ENCODE measurements at regions of chr5 and their contacts with region 1.

Region 1: DNA sequence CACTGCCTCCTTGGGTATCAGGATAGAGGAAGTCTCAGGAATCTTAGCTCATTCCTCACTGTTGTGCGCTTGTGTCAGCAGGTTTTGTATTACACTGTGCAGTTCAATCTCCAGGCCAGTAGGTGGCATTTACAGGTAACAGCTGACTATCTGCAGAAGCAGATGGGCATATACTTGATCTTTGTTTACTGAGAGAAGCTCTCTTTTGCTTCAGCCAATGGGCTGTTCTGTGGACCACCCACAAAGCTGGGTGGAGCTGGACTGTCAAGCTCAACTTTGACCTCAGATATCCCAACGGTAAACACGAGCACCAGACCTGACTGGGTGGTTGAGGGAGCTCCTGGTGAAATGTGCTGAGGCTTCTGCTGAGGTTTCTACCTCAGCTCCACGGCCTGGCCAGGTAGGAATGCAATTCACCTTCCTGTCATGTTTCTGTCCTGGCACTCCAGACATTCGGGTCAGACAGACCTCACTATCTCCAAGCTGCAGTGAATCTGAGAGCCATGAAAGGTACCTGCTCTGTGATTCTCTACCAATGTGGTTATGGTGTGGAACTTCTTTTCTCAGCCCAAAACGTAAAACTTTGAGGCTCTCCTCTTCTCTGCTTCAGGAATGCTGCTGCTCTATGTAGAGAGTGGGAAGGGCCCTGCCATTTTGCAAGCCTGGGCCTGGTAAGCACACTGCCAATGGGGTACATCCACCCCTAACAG is 167.9 kb upstream of the ACTBL2 start:
- DNase-seq: peak; percentile 84 to 89
- H3K4me3 ChIP-seq: peak overlapping the region; percentile 4; the same call in 1 of the 2 replicates
- H3K4me3 Mint-ChIP-seq: peak overlapping the region; percentile 30
- H3K27ac Mint-ChIP-seq: peak overlapping the region; percentile 0
- H3K4me1 ChIP-seq: peaks cover 9% of the 10 kb centered on the region
- H3K4me1 Mint-ChIP-seq: peaks cover 12% of the 10 kb centered on the region
- H3K27me3 ChIP-seq: no peaks in the 10 kb centered on the region; the same call in 1 of the 2 replicates
- H3K27me3 Mint-ChIP-seq: no peaks in the 10 kb centered on the region
- CTCF ChIP-seq: peak; percentile 74 to 76

Region 2: DNA sequence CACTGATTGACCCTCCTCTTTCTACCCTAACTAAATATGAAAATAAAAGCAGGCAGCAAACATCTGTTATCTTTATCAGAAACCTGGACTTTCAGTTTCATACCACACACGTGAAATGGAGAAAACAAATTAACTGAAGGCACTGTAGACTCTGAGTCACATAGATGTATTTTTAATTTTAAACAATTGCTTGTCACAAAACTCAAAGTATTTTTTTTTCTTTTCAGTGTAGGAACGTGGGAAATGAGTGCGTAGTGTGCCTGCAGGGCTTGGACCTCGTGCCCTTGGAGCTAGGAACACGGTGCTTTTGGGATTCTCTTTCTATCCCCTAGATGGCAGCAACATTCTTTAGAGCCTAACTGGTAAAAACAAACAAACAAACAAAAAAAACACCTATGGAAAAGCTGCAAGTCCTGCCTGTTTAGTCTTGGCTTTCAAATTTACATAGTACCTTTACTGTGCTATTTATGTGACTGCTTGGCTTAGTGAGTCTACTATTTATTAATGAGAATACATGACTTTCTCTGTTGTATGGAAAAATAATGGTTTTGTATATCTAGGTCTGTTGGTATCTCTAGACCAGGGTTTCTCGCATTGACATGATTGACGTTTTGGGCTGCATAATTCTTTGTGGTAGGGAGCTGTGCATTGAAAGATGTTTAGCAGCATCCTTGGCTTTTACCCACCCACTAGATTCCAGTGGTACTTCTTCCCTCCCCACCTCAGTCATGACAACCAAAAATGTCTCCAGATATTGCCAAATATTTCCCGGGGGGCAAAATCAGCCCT is 151.1 kb before region 1 on chr5:
- CTCF ChIA-PET with region 1: interaction called, 28 read pairs
- POLR2A ChIA-PET with region 1: no interaction called
- intact Hi-C with region 1: loop called (anchors 5 kb)
- DNase-seq: peak in 1 of 2 experiments; percentile 53
- H3K4me3 ChIP-seq: no peak overlapping the region
- H3K4me3 Mint-ChIP-seq: peak overlapping the region; percentile 46
- H3K27ac Mint-ChIP-seq: no peak overlapping the region
- H3K4me1 ChIP-seq: peaks cover 7% of the 10 kb centered on the region
- H3K4me1 Mint-ChIP-seq: peaks cover 8% of the 10 kb centered on the region
- H3K27me3 ChIP-seq: no peaks in the 10 kb centered on the region
- H3K27me3 Mint-ChIP-seq: no peaks in the 10 kb centered on the region
- CTCF ChIP-seq: peak; percentile 67 to 77

Region 3: GRCh38 chr5:57698769-57699168 is 48.3 kb after region 1 on chr5:
- CTCF ChIA-PET with region 1: interaction called, 8 read pairs
- POLR2A ChIA-PET with region 1: no interaction called
- intact Hi-C with region 1: loop called (anchors 5 kb)
- DNase-seq: peak; percentile 46 to 48
- H3K4me3 ChIP-seq: no peak overlapping the region
- H3K4me3 Mint-ChIP-seq: no peak overlapping the region
- H3K27ac Mint-ChIP-seq: no peak overlapping the region
- H3K4me1 ChIP-seq: peaks cover 23% of the 10 kb centered on the region
- H3K4me1 Mint-ChIP-seq: peaks cover 15% of the 10 kb centered on the region
- H3K27me3 ChIP-seq: no peaks in the 10 kb centered on the region
- H3K27me3 Mint-ChIP-seq: no peaks in the 10 kb centered on the region
- CTCF ChIP-seq: no peak

Region 4: GRCh38 chr5:57754616-57755015 is 104.1 kb after region 1 on chr5:
- CTCF ChIA-PET with region 1: interaction called, 11 read pairs
- POLR2A ChIA-PET with region 1: no interaction called
- intact Hi-C with region 1: no loop called
- DNase-seq: no peak
- H3K4me3 ChIP-seq: no peak overlapping the region
- H3K4me3 Mint-ChIP-seq: no peak overlapping the region
- H3K27ac Mint-ChIP-seq: no peak overlapping the region
- H3K4me1 ChIP-seq: no peaks in the 10 kb centered on the region
- H3K4me1 Mint-ChIP-seq: no peaks in the 10 kb centered on the region
- H3K27me3 ChIP-seq: no peaks in the 10 kb centered on the region
- H3K27me3 Mint-ChIP-seq: no peaks in the 10 kb centered on the region
- CTCF ChIP-seq: no peak

Region 5: GRCh38 chr5:57779383-57780223 is 129.1 kb after region 1 on chr5:
- CTCF ChIA-PET with region 1: interaction called, 75 read pairs
- POLR2A ChIA-PET with region 1: no interaction called
- intact Hi-C with region 1: loop called (anchors 1 kb)
- DNase-seq: peak; percentile 50 to 69
- H3K4me3 ChIP-seq: no peak overlapping the region
- H3K4me3 Mint-ChIP-seq: no peak overlapping the region
- H3K27ac Mint-ChIP-seq: no peak overlapping the region
- H3K4me1 ChIP-seq: peaks cover 34% of the 10 kb centered on the region
- H3K4me1 Mint-ChIP-seq: peaks cover 21% of the 10 kb centered on the region
- H3K27me3 ChIP-seq: no peaks in the 10 kb centered on the region
- H3K27me3 Mint-ChIP-seq: no peaks in the 10 kb centered on the region
- CTCF ChIP-seq: peak; percentile 65 to 68

Region 6: GRCh38 chr5:57887851-57888621 is 237.5 kb after region 1 on chr5:
- CTCF ChIA-PET with region 1: interaction called, 16 read pairs
- POLR2A ChIA-PET with region 1: no interaction called
- intact Hi-C with region 1: no loop called
- DNase-seq: peak; percentile 72 to 75
- H3K4me3 ChIP-seq: no peak overlapping the region
- H3K4me3 Mint-ChIP-seq: no peak overlapping the region
- H3K27ac Mint-ChIP-seq: no peak overlapping the region
- H3K4me1 ChIP-seq: no peaks in the 10 kb centered on the region
- H3K4me1 Mint-ChIP-seq: no peaks in the 10 kb centered on the region
- H3K27me3 ChIP-seq: no peaks in the 10 kb centered on the region
- H3K27me3 Mint-ChIP-seq: no peaks in the 10 kb centered on the region
- CTCF ChIP-seq: peak; percentile 55 to 80

Region 7: DNA sequence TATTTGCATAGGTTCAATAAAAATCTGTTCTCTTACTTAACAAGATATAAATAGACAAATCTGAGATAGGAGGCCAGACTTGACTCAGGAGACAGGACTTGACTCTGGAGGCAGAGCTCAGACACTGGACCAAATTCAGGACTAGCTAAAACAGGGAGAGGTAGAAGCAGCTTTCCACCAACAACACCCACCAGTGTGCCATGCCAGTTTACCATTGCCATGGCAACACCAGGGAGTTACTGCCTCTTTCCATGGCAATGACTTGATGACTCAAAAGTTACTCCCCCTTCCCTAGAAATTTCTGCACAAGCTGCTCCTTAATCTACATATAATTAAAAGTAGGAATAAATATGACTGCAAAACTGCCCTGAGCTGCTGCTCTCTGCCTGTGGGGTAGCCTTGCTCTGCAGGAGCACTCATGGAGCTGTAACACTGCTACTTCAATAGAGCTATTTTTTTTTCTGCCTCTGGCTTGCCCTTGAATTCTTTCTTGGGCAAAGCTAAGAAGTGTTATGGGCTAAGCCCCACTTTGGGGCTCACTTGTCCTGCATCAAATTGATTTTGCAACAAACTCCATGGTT is 336.3 kb after region 1 on chr5:
- CTCF ChIA-PET with region 1: no interaction called
- POLR2A ChIA-PET with region 1: no interaction called
- intact Hi-C with region 1: no loop called
- DNase-seq: no peak
- H3K4me3 ChIP-seq: no peak overlapping the region
- H3K4me3 Mint-ChIP-seq: no peak overlapping the region
- H3K27ac Mint-ChIP-seq: no peak overlapping the region
- H3K4me1 ChIP-seq: peaks cover 8% of the 10 kb centered on the region; the same call in 1 of the 2 replicates
- H3K4me1 Mint-ChIP-seq: peaks cover 16% of the 10 kb centered on the region
- H3K27me3 ChIP-seq: no peaks in the 10 kb centered on the region
- H3K27me3 Mint-ChIP-seq: no peaks in the 10 kb centered on the region
- CTCF ChIP-seq: no peak

Measured in Caco-2 (cell line).